Activated B cell treated with CpG ODN at 0.5 μM for 24 hours (primary cell): ENCODE measurements at regions of chr19 and their contacts with region 1.

Region 1: GRCh38 chr19:1605236-1606137 is at the start of gene UQCR11:
- DNase-seq: peak; percentile 87
- ATAC-seq: peak; percentile 88
- H3K4me3 Mint-ChIP-seq: peak within 1 kb of the TSS; percentile 93
- H3K27ac Mint-ChIP-seq: peak within 1 kb of the TSS; percentile 96
- H3K4me1 Mint-ChIP-seq: peaks cover 49% of the 10 kb centered on the region
- H3K27me3 Mint-ChIP-seq: no peaks in the 10 kb centered on the region
- CTCF ChIP-seq: no peak
- total RNA-seq, gene UQCR11: 117 and 141 TPM in 2 replicates

Region 2: DNA sequence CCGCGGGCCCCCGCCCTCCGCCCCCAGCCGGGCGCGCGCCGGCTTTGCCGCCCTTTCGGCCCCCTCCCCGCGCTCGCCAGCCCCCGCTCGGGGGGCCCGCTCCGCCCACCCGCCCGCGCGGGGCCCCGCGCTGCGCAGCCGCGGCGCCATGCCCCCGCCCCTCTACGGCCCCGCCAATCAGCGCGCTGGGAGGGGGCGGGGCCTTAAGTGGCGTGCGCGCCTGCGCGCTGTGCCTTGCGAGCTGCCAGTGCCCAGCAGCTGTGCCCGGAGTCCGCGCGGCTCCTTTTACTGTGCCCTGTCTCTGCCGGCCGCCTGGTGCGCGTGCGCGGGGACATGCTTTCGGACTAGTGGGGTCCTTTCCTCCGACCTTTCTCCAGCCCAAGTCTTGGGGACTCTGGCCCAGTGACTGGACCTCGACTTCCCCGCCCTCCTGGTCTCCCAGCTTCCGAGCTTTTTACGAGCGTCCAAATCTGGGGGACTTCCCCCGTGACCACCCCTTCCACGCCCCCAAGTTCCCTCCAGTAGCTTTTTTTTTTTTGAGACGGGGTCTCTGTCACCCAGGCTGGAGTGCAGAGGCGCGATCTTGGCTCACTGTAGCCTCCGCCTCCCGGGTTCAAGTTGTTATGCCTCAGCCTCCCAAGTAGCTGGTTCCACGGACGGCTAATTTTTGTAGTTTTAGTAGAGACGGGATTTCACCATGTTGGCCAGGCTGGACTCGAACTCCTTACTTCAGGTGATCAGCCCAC is 12.6 kb before region 1 on chr19 and contains the start of gene MBD3:
- CTCF ChIA-PET with region 1: interaction called, 3 read pairs
- POLR2A ChIA-PET with region 1: interaction called, 88 read pairs
- intact Hi-C with region 1: loop called (anchors 1 kb)
- DNase-seq: peak; percentile 89
- ATAC-seq: peak; percentile 84
- H3K4me3 Mint-ChIP-seq: peak within 1 kb of the TSS; percentile 90
- H3K27ac Mint-ChIP-seq: peak within 1 kb of the TSS; percentile 89
- H3K4me1 Mint-ChIP-seq: peaks cover 33% of the 10 kb centered on the region
- H3K27me3 Mint-ChIP-seq: no peaks in the 10 kb centered on the region
- CTCF ChIP-seq: no peak
- total RNA-seq, gene MBD3: 91.9 and 96.9 TPM in 2 replicates

Region 3: DNA sequence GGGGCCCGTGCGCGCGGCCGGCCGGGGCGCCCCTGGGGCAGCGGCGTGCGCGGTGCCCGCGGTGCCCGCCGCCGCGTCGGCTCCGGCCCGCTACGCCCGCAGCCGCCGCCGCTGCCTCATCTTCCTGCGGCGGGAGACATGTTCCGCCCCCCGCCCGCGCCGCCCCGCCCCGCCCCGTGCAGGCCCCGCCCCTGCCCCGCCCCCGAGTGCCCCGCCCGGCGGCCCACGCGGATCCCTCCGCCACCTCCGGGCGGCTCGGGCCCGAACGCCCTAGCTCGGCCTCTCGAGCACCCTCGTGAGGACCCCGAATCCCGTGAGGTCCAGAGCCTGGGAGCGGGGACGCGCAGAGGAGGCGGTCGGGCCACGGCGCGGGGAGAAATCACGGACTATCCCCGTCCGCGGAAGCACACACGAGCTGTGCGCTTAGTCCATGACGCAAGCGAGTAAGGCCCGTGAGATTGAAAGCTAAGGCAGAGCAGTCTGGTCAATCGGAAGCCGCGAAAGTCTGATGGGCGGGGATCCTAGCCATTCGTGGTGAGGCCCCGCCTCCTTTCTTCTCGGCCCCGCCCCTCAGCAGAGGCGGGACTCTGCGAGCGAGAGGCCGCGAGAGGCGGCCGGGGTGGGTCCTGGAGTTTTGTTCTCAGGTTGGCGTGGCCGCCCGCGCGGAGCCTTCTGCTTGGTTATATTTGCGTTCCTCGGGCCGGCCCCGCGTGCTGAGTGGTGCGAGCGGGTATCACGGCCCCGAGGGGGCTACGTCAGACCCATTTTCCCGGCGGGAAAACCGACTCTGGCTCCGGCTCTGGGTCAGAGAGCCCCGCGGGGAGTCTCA is 47.2 kb after region 1 on chr19 and contains the start of gene TCF3:
- CTCF ChIA-PET with region 1: no interaction called
- POLR2A ChIA-PET with region 1: interaction called, 36 read pairs
- intact Hi-C with region 1: loop called (anchors 1 kb)
- DNase-seq: peak; percentile 99
- ATAC-seq: peak; percentile 82
- H3K4me3 Mint-ChIP-seq: peak within 1 kb of the TSS; percentile 91
- H3K27ac Mint-ChIP-seq: peak within 1 kb of the TSS; percentile 95
- H3K4me1 Mint-ChIP-seq: peaks cover 68% of the 10 kb centered on the region
- H3K27me3 Mint-ChIP-seq: no peaks in the 10 kb centered on the region
- CTCF ChIP-seq: no peak
- total RNA-seq, gene TCF3: 139 and 143 TPM in 2 replicates

Region 4: DNA sequence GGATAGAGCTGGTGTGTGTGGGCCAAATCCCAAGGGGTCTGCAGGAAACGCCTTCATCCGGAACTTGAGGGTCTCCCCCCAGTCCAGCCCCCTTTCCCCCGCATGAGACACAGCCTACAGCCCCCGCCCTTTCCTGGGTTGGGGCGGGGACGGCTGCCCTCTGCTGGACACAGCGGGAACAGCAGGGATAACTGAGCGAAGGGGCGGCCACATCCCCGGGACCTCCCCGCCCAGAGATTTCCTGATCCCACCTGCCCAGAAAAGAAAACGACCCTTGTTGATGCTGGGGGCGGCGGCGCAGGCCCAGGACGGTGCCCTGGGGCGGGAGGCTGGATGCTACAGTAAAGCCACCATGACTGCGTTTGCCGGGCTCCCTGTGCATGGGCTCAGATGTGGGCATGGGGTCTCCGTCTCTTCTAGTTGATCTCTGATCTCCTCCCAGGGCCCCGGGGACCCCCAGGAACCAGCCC is 162.0 kb after region 1 on chr19:
- CTCF ChIA-PET with region 1: no interaction called
- POLR2A ChIA-PET with region 1: no interaction called
- intact Hi-C with region 1: loop called (anchors 1 kb)
- DNase-seq: peak; percentile 74
- ATAC-seq: peak; percentile 84
- H3K4me3 Mint-ChIP-seq: no peak overlapping the region
- H3K27ac Mint-ChIP-seq: no peak overlapping the region
- H3K4me1 Mint-ChIP-seq: peaks cover 4% of the 10 kb centered on the region
- H3K27me3 Mint-ChIP-seq: peaks cover 57% of the 10 kb centered on the region
- CTCF ChIP-seq: no peak